Common myeloid progenitor, CD34-positive (primary cell): ENCODE measurements at regions of chr1 and their contacts with region 1.

Region 1: GRCh38 chr1:211578640-211579433 is at the start of gene SLC30A1:
- DNase-seq: peak; percentile 98 to 99 (median 98)
- H3K4me3 ChIP-seq: peak within 1 kb of the TSS; percentile 76 to 93 (median 87)
- H3K27ac ChIP-seq: peak within 1 kb of the TSS in 1 of 2 experiments; percentile 70
- H3K4me1 ChIP-seq: peaks cover 18 to 70% (median 41%) of the 10 kb centered on the region in 4 experiments
- H3K27me3 ChIP-seq: no peaks in the 10 kb centered on the region

Region 2: GRCh38 chr1:211335522-211336157 is 243.2 kb before region 1 on chr1:
- CTCF ChIA-PET with region 1: no interaction called
- POLR2A ChIA-PET with region 1: no interaction called
- DNase-seq: no peak
- H3K4me3 ChIP-seq: peak overlapping the region in 4 of 7 experiments; percentile 7 to 49 (median 41)
- H3K27ac ChIP-seq: peak overlapping the region in 1 of 2 experiments; percentile 67
- H3K4me1 ChIP-seq: peaks cover 11 to 68% (median 55%) of the 10 kb centered on the region in 4 experiments
- H3K27me3 ChIP-seq: no peaks in the 10 kb centered on the region

Region 3: GRCh38 chr1:211468595-211468994 is 110.2 kb before region 1 on chr1:
- CTCF ChIA-PET with region 1: no interaction called
- POLR2A ChIA-PET with region 1: no interaction called
- DNase-seq: peak; percentile 91 to 100 (median 99)
- H3K4me3 ChIP-seq: no peak overlapping the region
- H3K27ac ChIP-seq: peak overlapping the region in 1 of 2 experiments; percentile 39
- H3K4me1 ChIP-seq: peaks cover 5 to 28% (median 22%) of the 10 kb centered on the region in 4 experiments
- H3K27me3 ChIP-seq: no peaks in the 10 kb centered on the region

Region 4: GRCh38 chr1:211589782-211590721 is 11.2 kb after region 1 on chr1:
- CTCF ChIA-PET with region 1: interaction called, 21 read pairs
- POLR2A ChIA-PET with region 1: no interaction called
- DNase-seq: peak; percentile 78 to 91 (median 89)
- H3K4me3 ChIP-seq: peak overlapping the region in 1 of 7 experiments; percentile 25
- H3K27ac ChIP-seq: no peak overlapping the region
- H3K4me1 ChIP-seq: peaks cover 7 to 42% (median 17%) of the 10 kb centered on the region in 4 experiments
- H3K27me3 ChIP-seq: no peaks in the 10 kb centered on the region

Region 5: DNA sequence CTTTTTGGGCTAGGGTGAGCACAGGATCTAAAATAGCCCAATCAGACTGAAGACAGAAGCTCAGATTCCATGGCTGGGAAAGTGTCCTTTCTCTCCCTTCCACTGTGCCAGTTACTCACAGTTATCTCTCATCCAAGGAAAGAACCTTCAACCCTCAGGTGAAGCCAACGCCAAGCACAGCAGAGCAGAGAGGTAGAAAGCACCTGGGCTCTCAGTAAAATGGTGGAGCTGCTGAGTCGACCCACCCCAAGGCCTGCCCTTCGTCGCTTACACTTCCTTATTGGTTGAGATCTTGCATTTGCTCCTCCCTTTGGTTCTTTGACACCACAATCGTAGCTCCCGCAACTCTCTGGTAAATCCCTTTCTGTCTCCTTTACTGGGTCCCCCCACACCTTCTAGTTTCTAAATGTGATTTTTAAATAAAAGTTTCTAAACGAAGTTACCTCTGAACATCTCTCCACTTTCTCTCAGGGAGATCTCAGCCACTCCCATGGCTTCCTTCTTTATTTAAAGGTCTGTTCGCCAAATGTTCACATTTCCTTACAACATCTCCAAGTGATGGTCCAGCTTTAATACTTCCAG is 27.6 kb after region 1 on chr1:
- CTCF ChIA-PET with region 1: interaction called, 12 read pairs
- POLR2A ChIA-PET with region 1: no interaction called
- DNase-seq: no peak
- H3K4me3 ChIP-seq: peak overlapping the region in 4 of 7 experiments; percentile 2 to 61 (median 54)
- H3K27ac ChIP-seq: peak overlapping the region in 1 of 2 experiments; percentile 73
- H3K4me1 ChIP-seq: peaks cover 10 to 52% (median 21%) of the 10 kb centered on the region in 4 experiments
- H3K27me3 ChIP-seq: no peaks in the 10 kb centered on the region

Region 6: DNA sequence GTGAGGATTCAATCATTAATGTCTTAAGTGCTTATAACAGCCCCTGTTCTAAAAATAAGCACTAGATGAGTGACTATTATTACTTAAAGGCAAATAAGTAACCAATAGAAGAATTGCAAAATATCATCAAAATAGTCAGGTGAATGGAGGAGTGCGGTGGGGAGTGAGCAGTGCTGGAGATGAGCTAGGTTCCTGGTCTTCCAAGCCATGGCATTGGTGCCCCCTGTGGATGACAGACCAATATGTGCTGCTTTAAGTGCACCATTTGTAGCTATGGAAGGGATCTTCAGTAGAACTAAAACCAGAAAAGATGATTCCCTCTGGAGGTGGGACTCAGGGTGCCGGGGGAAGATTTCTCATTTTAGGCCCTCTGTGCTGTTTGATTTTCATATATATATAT is 46.2 kb after region 1 on chr1:
- CTCF ChIA-PET with region 1: interaction called, 25 read pairs
- POLR2A ChIA-PET with region 1: no interaction called
- DNase-seq: peak; percentile 62 to 64 (median 63)
- H3K4me3 ChIP-seq: no peak overlapping the region
- H3K27ac ChIP-seq: no peak overlapping the region
- H3K4me1 ChIP-seq: peaks cover 5 to 18% (median 11%) of the 10 kb centered on the region in 4 experiments
- H3K27me3 ChIP-seq: peaks cover 0 to 51% (median 9%) of the 10 kb centered on the region in 5 experiments

Region 7: GRCh38 chr1:211648980-211649934 is 70.4 kb after region 1 on chr1:
- CTCF ChIA-PET with region 1: interaction called, 15 read pairs
- POLR2A ChIA-PET with region 1: no interaction called
- DNase-seq: peak in 1 of 3 donors; percentile 66
- H3K4me3 ChIP-seq: no peak overlapping the region
- H3K27ac ChIP-seq: no peak overlapping the region
- H3K4me1 ChIP-seq: no peaks in the 10 kb centered on the region
- H3K27me3 ChIP-seq: peaks cover 0 to 2% (median 0%) of the 10 kb centered on the region in 5 experiments

Region 8: DNA sequence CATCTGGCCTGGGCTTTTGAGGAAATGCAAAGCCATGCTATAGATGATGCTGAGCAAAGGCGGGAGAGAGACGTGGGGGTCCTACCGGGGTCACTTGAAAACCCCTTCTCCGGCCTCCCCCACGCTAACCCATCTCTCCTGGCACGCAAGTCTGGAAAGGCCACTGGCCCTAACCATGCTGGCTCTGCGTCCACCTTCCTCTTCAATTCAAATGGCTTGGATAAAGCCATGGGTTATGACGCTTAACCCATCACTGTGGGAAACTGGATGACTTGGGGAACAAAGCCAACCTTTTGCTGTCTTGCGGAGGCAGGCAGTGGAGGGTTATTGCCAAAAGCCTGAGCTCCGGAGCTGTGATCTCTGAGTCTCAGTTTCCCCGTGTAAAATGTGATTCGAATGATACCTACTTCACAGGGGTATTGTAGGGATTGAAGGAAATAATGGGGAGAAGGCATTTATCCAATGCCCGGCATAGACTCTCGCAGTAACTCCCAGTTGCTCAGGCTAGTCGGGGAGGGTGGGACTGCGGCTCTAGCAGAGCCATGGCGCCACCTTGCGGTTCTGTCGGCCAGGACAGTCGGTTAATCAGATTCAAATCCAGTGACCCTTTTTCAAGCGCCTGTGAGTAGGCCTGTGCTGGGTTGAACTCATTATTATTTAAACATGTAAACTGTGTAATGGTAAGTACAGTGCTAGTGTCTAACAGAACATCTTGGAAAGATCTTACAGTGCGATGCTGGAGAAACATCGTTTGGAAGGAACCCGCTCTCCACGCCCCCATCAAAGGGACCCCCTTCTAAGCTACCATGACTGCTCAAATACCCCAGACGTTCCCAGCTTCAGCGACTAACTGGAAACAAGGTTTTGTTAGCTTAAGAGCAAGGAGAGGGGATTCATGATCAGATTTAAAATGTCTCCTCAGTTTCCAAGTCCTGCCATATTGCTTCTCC is 76.3 kb after region 1 on chr1:
- CTCF ChIA-PET with region 1: interaction called, 15 read pairs
- POLR2A ChIA-PET with region 1: interaction called, 5 read pairs
- DNase-seq: peak; percentile 83 to 90 (median 83)
- H3K4me3 ChIP-seq: no peak overlapping the region
- H3K27ac ChIP-seq: no peak overlapping the region
- H3K4me1 ChIP-seq: no peaks in the 10 kb centered on the region
- H3K27me3 ChIP-seq: peaks cover 0 to 3% (median 0%) of the 10 kb centered on the region in 5 experiments